ENCODE measurements at regions of chr4 and their contacts with region 1.

Region 1: GRCh38 chr4:164731827-164732474 is 22.0 kb upstream of the SMIM31 start:
- DNase-seq: peak; percentile 54
- H3K4me3 ChIP-seq: peak overlapping the region in 1 of 2 experiments; percentile 31; a peak in 1 of 4 replicates
- H3K27ac ChIP-seq: no peak overlapping the region
- H3K4me1 ChIP-seq: peaks cover 0 to 5% of the 10 kb centered on the region in 2 experiments; a peak in 1 of 4 replicates
- H3K27me3 ChIP-seq: no peaks in the 10 kb centered on the region; the same call in 1 of the 2 replicates
- CTCF ChIP-seq: peak; percentile 93
- EP300 ChIP-seq: no peak
- RAD21 ChIP-seq: peak; percentile 75

Region 2: DNA sequence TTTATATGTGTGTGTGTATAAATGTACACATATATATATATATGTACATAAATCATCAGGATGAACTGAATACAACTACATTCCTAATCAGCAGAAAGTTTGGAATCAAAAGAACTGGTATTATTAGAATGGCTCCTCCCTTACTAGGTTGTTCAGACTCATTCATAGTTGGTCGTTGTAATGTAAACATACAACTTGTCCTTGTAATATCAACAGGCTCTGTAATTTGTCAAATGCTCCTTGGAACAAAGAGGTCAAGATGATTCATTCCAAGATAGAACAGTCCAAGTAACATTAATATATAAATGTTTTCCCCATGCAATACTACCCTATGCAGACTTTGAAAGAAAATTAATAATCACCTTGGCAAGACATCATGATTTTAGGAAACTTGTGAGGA is 329.4 kb before region 1 on chr4:
- CTCF ChIA-PET with region 1: no interaction called
- POLR2A ChIA-PET with region 1: no interaction called
- DNase-seq: no peak
- H3K4me3 ChIP-seq: no peak overlapping the region
- H3K27ac ChIP-seq: no peak overlapping the region
- H3K4me1 ChIP-seq: no peaks in the 10 kb centered on the region; a peak in 1 of 4 replicates
- H3K27me3 ChIP-seq: no peaks in the 10 kb centered on the region
- CTCF ChIP-seq: no peak
- EP300 ChIP-seq: no peak
- RAD21 ChIP-seq: no peak

Region 3: GRCh38 chr4:164716901-164717300 is 15.1 kb before region 1 on chr4:
- CTCF ChIA-PET with region 1: interaction called, 22 read pairs
- POLR2A ChIA-PET with region 1: no interaction called
- DNase-seq: no peak
- H3K4me3 ChIP-seq: no peak overlapping the region
- H3K27ac ChIP-seq: no peak overlapping the region
- H3K4me1 ChIP-seq: no peaks in the 10 kb centered on the region
- H3K27me3 ChIP-seq: no peaks in the 10 kb centered on the region
- CTCF ChIP-seq: peak; percentile 24
- EP300 ChIP-seq: no peak
- RAD21 ChIP-seq: no peak

Measured in SK-N-SH (cell line).